WTC11 (cell line): ENCODE measurements at regions of chr12 and their contacts with region 1.

Region 1: DNA sequence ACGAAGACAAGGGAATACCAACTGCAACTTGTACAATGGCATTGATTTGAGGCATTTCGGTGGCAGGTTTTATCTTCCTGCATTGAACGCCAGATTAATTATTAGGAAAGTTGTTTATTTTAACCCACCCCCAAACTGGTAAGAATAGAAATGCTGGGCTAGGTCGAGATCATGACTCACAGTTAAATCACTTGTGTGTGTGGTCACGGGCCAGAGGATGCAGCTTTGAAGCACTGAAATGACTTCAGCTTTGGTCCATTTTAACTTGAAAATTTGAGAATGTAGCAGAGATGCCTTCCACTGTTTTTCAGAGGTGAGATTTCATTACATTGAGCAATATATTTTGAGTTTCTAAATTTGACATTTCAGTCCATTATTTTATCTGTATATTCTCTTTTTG is 23.6 kb upstream of the KCNH3 start:
- DNase-seq: no peak
- ATAC-seq: no peak
- H3K4me3 Mint-ChIP-seq: no peak overlapping the region
- H3K27ac Mint-ChIP-seq: no peak overlapping the region; the same call in 1 of the 2 replicates
- H3K4me1 Mint-ChIP-seq: no peaks in the 10 kb centered on the region
- H3K27me3 Mint-ChIP-seq: no peaks in the 10 kb centered on the region
- CTCF ChIP-seq: no peak

Region 2: DNA sequence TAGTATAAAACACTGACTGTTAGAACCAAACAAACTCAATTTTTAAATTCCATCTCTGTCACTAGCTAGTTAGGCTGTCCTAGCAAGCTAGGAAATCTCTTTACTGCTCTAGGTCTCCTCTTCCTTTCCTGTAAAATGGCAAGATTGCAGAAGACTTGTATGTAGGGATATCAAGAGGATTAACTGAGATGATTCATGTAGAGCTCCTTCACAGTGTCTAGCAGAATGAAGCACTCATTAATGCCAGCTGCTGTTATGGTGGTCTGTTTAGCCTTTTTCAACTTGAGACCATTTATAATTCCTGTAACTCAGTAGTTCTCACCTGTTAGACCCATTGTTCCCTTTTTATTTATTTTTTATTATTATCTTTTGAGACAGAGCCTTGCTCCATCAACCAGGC is 44.3 kb before region 1 on chr12:
- CTCF ChIA-PET with region 1: no interaction called
- POLR2A ChIA-PET with region 1: no interaction called
- DNase-seq: no peak
- ATAC-seq: no peak
- H3K4me3 Mint-ChIP-seq: no peak overlapping the region
- H3K27ac Mint-ChIP-seq: no peak overlapping the region
- H3K4me1 Mint-ChIP-seq: peaks cover 6% of the 10 kb centered on the region
- H3K27me3 Mint-ChIP-seq: no peaks in the 10 kb centered on the region
- CTCF ChIP-seq: no peak

Region 3: GRCh38 chr12:49489720-49490119 is 25.5 kb before region 1 on chr12:
- CTCF ChIA-PET with region 1: no interaction called
- POLR2A ChIA-PET with region 1: no interaction called
- DNase-seq: no peak
- ATAC-seq: peak; percentile 70
- H3K4me3 Mint-ChIP-seq: peak overlapping the region; percentile 5; the same call in 1 of the 2 replicates
- H3K27ac Mint-ChIP-seq: peak overlapping the region; percentile 35
- H3K4me1 Mint-ChIP-seq: peaks cover 28% of the 10 kb centered on the region
- H3K27me3 Mint-ChIP-seq: no peaks in the 10 kb centered on the region
- CTCF ChIP-seq: no peak

Region 4: GRCh38 chr12:49503674-49504180 is 11.5 kb before region 1 on chr12:
- CTCF ChIA-PET with region 1: interaction called, 13 read pairs
- POLR2A ChIA-PET with region 1: no interaction called
- DNase-seq: no peak
- ATAC-seq: no peak
- H3K4me3 Mint-ChIP-seq: no peak overlapping the region
- H3K27ac Mint-ChIP-seq: no peak overlapping the region
- H3K4me1 Mint-ChIP-seq: no peaks in the 10 kb centered on the region
- H3K27me3 Mint-ChIP-seq: no peaks in the 10 kb centered on the region
- CTCF ChIP-seq: no peak

Region 5: GRCh38 chr12:49567611-49568441 is 52.6 kb after region 1 on chr12 and contains the start of gene MCRS1:
- CTCF ChIA-PET with region 1: no interaction called
- POLR2A ChIA-PET with region 1: no interaction called
- DNase-seq: peak; percentile 81
- ATAC-seq: peak; percentile 74
- H3K4me3 Mint-ChIP-seq: peak within 1 kb of the TSS; percentile 98
- H3K27ac Mint-ChIP-seq: peak within 1 kb of the TSS; percentile 99
- H3K4me1 Mint-ChIP-seq: peaks cover 12% of the 10 kb centered on the region
- H3K27me3 Mint-ChIP-seq: no peaks in the 10 kb centered on the region
- CTCF ChIP-seq: no peak
- total RNA-seq, gene MCRS1: 94.8 to 105 TPM (median 96.5 TPM) in 3 replicates